K562 (cell line): ENCODE measurements at regions of chr13 and their contacts with region 1.

Region 1: DNA sequence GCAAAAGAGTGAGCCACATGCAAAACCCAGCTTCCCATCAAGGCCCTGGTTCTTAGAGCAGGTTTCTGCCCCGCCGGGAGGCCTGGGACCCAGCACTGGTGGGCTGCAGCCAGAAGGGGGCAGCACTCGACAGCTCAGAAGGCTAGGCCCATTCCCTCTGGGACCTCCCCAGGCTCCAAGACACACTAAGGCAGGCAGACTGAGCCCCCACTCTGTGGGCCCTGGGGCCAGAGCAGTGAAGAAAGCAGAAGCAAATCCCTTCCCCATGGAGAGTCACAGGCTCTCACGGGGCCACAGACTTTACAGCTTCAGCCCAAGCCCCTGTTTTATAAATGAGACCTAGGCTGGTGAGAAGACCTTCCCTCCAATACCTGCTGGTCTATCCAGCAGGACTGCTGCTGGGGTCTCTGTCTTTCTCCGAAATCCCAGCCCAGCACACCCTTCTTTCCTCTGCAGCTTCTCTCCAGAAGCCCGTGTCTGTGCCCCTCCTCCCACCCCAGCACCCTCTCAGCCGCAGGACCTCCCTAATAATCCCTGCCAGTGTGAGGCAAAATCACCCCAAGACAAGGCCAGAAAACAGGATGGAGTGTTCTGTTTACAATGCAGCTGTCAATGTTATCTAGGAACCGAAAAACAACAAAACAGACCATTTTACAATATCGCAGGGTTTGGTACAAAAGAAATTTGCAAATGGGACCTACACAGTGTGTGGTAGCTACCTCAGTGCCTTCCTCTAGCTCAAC is 109.3 kb downstream of the ABCC4 start:
- DNase-seq: peak; percentile 62 to 82 (median 66)
- ATAC-seq: peak; percentile 100
- H3K4me3 ChIP-seq: no peak overlapping the region
- H3K27ac ChIP-seq: no peak overlapping the region
- H3K4me1 ChIP-seq: 0 out of 5 replicates have a peak, but pooled peaks cover 0 to 3% of the 10 kb centered on the region in 2 experiments
- H3K27me3 ChIP-seq: no peaks in the 10 kb centered on the region
- CTCF ChIP-seq: peak; percentile 78 to 88 (median 88)
- EP300 ChIP-seq: no peak
- POLR2A ChIP-seq: no peak
- RAD21 ChIP-seq: peak; percentile 84 to 91

Region 2: GRCh38 chr13:94886191-94886590 is 305.8 kb before region 1 on chr13:
- CTCF ChIA-PET with region 1: no interaction called
- POLR2A ChIA-PET with region 1: no interaction called
- in situ Hi-C with region 1: no loop called
- intact Hi-C with region 1: no loop called
- DNase-seq: no peak
- ATAC-seq: no peak
- H3K4me3 ChIP-seq: no peak overlapping the region
- H3K27ac ChIP-seq: no peak overlapping the region
- H3K4me1 ChIP-seq: no peaks in the 10 kb centered on the region
- H3K27me3 ChIP-seq: no peaks in the 10 kb centered on the region
- CTCF ChIP-seq: no peak
- EP300 ChIP-seq: no peak
- POLR2A ChIP-seq: no peak
- RAD21 ChIP-seq: no peak

Region 3: DNA sequence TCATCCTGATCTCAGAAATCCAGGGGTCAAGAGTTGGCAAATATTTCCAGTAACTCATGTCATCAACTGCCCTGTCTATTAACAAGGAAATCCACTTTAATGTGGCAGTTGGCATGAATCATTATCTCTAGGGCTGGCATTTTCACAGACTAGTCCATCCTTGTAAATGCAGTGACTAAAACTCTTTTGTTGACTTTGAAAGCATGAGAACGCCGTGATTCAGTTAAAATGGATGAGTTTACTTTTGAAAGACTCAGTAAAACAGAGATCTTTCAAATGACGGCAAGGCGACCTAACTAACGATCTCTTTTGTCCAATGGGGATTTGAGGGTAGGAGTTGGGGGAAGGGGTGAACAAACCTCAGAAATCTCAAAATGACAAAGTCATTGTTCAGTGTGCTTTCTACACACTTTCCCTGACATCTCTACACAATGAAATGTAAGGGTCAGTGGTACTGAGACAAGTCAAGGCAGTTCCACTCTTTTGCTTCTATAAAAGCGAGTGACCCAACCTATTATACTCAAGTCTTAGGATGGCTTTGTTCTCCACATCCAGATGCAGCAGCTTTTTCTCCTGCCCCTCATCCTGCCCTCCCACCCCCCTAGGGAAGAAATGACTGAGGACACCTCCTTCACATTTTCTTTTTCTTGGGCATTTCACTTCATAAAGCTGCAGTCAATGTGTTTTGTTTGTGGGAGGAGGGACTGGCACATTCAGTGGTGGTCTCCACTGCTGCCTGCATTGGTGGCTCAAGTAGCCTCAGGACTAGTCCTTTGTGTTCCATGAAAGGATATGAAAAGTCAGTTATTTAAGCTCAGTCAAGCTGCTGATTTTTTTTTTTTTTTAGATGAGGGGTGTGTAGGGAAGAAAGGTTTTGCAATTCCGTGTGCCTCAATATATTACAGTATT is 91.2 kb before region 1 on chr13:
- CTCF ChIA-PET with region 1: no interaction called
- POLR2A ChIA-PET with region 1: no interaction called
- in situ Hi-C with region 1: no loop called
- intact Hi-C with region 1: no loop called
- DNase-seq: no peak
- ATAC-seq: no peak
- H3K4me3 ChIP-seq: no peak overlapping the region
- H3K27ac ChIP-seq: no peak overlapping the region
- H3K4me1 ChIP-seq: no peaks in the 10 kb centered on the region
- H3K27me3 ChIP-seq: no peaks in the 10 kb centered on the region
- CTCF ChIP-seq: no peak
- EP300 ChIP-seq: no peak
- POLR2A ChIP-seq: no peak
- RAD21 ChIP-seq: no peak

Region 4: GRCh38 chr13:95269756-95270155 is 77.8 kb after region 1 on chr13:
- CTCF ChIA-PET with region 1: no interaction called
- POLR2A ChIA-PET with region 1: interaction called, 3 read pairs
- in situ Hi-C with region 1: no loop called
- intact Hi-C with region 1: loop called (anchors 5 kb)
- DNase-seq: no peak
- ATAC-seq: no peak
- H3K4me3 ChIP-seq: no peak overlapping the region
- H3K27ac ChIP-seq: no peak overlapping the region; the same call in 2 of the 3 replicates
- H3K4me1 ChIP-seq: peaks cover 20 to 48% of the 10 kb centered on the region in 2 experiments; a peak in 4 of 5 replicates
- H3K27me3 ChIP-seq: no peaks in the 10 kb centered on the region
- CTCF ChIP-seq: no peak
- EP300 ChIP-seq: no peak
- POLR2A ChIP-seq: no peak
- RAD21 ChIP-seq: no peak

Region 5: GRCh38 chr13:95301183-95301967 is 109.4 kb after region 1 on chr13 and contains the start of gene ABCC4:
- CTCF ChIA-PET with region 1: no interaction called
- POLR2A ChIA-PET with region 1: no interaction called
- in situ Hi-C with region 1: loop called (anchors 10 kb)
- intact Hi-C with region 1: loop called (anchors 5 kb)
- DNase-seq: peak; percentile 77 to 81 (median 80)
- ATAC-seq: peak; percentile 90
- H3K4me3 ChIP-seq: peak within 1 kb of the TSS; percentile 86
- H3K27ac ChIP-seq: peak within 1 kb of the TSS; percentile 88
- H3K4me1 ChIP-seq: peaks cover 22 to 30% of the 10 kb centered on the region in 2 experiments; a peak in 4 of 5 replicates
- H3K27me3 ChIP-seq: no peaks in the 10 kb centered on the region
- CTCF ChIP-seq: 0 out of 6 replicates have a peak, but pooled peaks of 1 of the 3 experiments have one; percentile 6
- EP300 ChIP-seq: no peak
- POLR2A ChIP-seq: peak; percentile 58; the same call in 1 of the 2 replicates
- RAD21 ChIP-seq: peak in 1 of 2 experiments; percentile 18; a peak in 2 of 4 replicates
- polyA plus RNA-seq, gene ABCC4: 9.4 to 10.5 TPM

Region 6: GRCh38 chr13:95378603-95379002 is 186.6 kb after region 1 on chr13:
- CTCF ChIA-PET with region 1: interaction called, 6 read pairs
- POLR2A ChIA-PET with region 1: no interaction called
- in situ Hi-C with region 1: no loop called
- intact Hi-C with region 1: loop called (anchors 1 kb)
- DNase-seq: no peak
- ATAC-seq: no peak; the same call in 2 of the 3 replicates
- H3K4me3 ChIP-seq: no peak overlapping the region
- H3K27ac ChIP-seq: no peak overlapping the region
- H3K4me1 ChIP-seq: peaks cover 0 to 6% of the 10 kb centered on the region in 2 experiments; a peak in 3 of 5 replicates
- H3K27me3 ChIP-seq: no peaks in the 10 kb centered on the region
- CTCF ChIP-seq: no peak
- EP300 ChIP-seq: no peak
- POLR2A ChIP-seq: no peak
- RAD21 ChIP-seq: no peak

Region 7: DNA sequence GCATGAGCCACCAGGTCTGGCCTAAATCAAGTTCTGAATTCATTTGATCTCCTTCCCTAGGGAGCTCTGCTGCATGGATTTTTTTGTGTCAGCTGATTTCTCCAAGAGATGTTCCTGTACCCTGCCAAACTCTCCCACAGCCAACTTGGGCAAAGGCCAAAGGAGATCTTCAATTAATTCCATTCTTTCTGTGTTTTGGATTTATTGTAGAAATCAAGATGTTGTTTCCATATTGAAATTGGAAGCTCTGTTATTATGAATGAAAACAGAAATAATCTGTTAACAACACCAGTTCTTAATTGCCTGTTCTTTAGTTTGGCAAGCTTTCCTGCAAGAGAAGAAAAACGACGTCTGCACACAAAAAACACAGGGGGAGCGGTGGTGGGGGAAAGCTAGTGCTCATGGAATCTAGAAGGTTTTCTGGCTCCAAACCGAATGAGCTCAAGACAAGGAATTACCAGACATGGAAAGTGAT is 195.8 kb after region 1 on chr13:
- CTCF ChIA-PET with region 1: no interaction called
- POLR2A ChIA-PET with region 1: no interaction called
- in situ Hi-C with region 1: loop called (anchors 5 kb)
- intact Hi-C with region 1: no loop called
- DNase-seq: no peak
- ATAC-seq: no peak
- H3K4me3 ChIP-seq: no peak overlapping the region
- H3K27ac ChIP-seq: no peak overlapping the region
- H3K4me1 ChIP-seq: peaks cover 0 to 6% of the 10 kb centered on the region in 2 experiments; a peak in 3 of 5 replicates
- H3K27me3 ChIP-seq: no peaks in the 10 kb centered on the region; a peak in 2 of 5 replicates
- CTCF ChIP-seq: no peak
- EP300 ChIP-seq: no peak
- POLR2A ChIP-seq: no peak
- RAD21 ChIP-seq: no peak